Lower leg skin (tissue), 4 donors: ENCODE measurements at regions of chr11 and their contacts with region 1.

Region 1: GRCh38 chr11:111841370-111842053 is 29.9 kb downstream of the ALG9 start:
- DNase-seq: peak; percentile 92 to 99
- H3K4me3 ChIP-seq: no peak overlapping the region
- CTCF ChIP-seq: peak in 1 of 3 donors; percentile 54
- POLR2A ChIP-seq: no peak

Region 2: DNA sequence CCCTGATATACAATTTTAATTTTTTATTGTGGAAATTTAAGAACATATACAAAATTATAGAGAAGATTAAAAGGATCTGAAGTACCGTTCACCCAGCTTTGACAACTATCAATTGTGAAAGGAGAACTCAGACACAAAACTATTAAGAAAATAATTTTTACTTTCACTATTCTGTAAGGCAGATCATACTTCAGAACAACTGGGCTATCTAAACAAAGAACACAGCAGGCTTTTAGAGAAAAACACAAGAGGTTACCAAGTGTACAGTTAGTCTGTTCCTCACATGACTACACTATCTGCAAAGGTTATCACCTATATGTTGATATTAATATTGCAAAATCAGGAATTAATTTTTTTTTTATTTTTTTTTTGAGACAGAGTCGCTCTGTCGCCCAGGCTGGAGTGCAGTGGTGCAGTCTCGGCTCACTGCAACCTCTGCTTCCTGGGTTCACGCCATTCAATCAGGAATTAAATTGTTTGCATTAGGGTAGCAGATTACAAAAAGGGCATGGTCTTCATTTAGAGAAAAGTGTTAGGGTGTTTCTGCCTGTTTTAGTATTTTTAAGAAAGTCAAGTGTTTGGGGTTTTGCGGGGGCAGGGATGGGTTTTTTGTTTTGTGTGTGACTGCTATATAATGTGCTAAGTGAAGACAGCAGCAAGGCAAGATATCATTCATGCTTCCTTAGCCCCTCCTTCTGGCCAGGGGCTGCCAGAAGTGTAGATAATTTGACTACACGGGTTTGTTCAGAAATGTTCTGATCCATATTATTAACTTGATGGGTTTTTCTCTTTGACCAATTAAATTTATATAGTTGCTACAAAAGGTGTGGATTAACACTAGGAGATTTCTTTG is 266.9 kb before region 1 on chr11:
- intact Hi-C with region 1: loop called (anchors 10 kb)
- DNase-seq: no peak
- H3K4me3 ChIP-seq: no peak overlapping the region
- CTCF ChIP-seq: no peak
- POLR2A ChIP-seq: no peak

Region 3: GRCh38 chr11:111788051-111788450 is 53.5 kb before region 1 on chr11:
- intact Hi-C with region 1: loop called (anchors 10 kb)
- DNase-seq: peak in 1 of 2 donors; percentile 27
- H3K4me3 ChIP-seq: no peak overlapping the region
- CTCF ChIP-seq: no peak
- POLR2A ChIP-seq: no peak